CD14-positive monocyte (primary cell): ENCODE measurements at regions of chr18 and their contacts with region 1.

Region 1: DNA sequence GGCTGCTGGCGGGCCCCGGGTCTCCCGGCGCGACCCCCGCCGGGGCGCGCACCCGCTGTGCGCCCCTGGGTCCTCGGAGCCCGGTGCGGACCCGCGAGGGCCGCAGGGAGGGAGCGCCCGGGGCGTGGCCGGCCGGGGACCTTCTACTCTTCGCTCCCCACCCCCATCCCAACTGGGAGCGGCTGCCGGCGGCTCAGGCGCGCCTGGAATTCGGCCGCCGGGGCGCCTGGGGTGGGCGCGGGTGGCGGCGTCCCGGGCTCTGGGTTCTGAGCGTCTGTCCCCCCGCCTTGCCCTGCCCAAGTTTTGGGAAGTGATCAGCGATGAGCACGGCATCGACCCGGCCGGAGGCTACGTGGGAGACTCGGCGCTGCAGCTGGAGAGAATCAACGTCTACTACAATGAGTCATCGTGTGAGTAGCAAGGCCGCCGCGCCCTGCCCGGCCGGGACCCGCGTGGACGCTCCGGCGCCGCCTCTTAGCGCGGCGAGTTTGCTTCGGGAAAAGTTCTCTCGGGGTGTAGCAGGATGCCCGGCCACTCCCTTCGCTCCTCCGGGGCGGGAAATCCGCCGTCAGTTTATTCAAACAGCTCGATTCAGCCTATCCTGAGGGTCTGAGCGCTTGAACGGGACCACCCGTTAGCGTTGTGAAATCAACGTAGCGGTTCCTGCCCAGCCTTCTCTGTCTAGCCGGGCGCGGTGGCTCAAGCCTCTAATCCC is 502 bp downstream of the TUBB6 start:
- DNase-seq: peak; percentile 88 to 90 (median 88)
- H3K4me3 ChIP-seq: peak overlapping the region; percentile 24 to 80 (median 56)
- H3K4me3 Mint-ChIP-seq: peak overlapping the region; percentile 82 to 87
- H3K27ac ChIP-seq: peak overlapping the region in 1 of 2 donors; percentile 78
- H3K27ac Mint-ChIP-seq: peak overlapping the region; percentile 66 to 92 (median 77)
- H3K4me1 ChIP-seq: peaks cover 23 to 34% of the 10 kb centered on the region in 2 donors
- H3K4me1 Mint-ChIP-seq: peaks cover 26% of the 10 kb centered on the region
- H3K27me3 ChIP-seq: peaks cover 0 to 33% of the 10 kb centered on the region in 2 donors
- H3K27me3 Mint-ChIP-seq: peaks cover 17 to 43% (median 36%) of the 10 kb centered on the region in 3 donors
- CTCF ChIP-seq: no peak

Region 2: GRCh38 chr18:12361770-12362378 is 53.3 kb after region 1 on chr18:
- intact Hi-C with region 1: no loop called
- DNase-seq: no peak
- H3K4me3 ChIP-seq: no peak overlapping the region
- H3K4me3 Mint-ChIP-seq: no peak overlapping the region
- H3K27ac ChIP-seq: no peak overlapping the region
- H3K27ac Mint-ChIP-seq: peak overlapping the region in 1 of 7 donors; percentile 61
- H3K4me1 ChIP-seq: peaks cover 2 to 5% of the 10 kb centered on the region in 2 donors
- H3K4me1 Mint-ChIP-seq: peaks cover 5% of the 10 kb centered on the region
- H3K27me3 ChIP-seq: no peaks in the 10 kb centered on the region
- H3K27me3 Mint-ChIP-seq: no peaks in the 10 kb centered on the region
- CTCF ChIP-seq: no peak

Region 3: GRCh38 chr18:12376718-12377555 is 68.4 kb after region 1 on chr18 and contains the start of gene AFG3L2:
- intact Hi-C with region 1: loop called (anchors 5 to 10 kb)
- DNase-seq: peak; percentile 98 to 99 (median 99)
- H3K4me3 ChIP-seq: peak within 1 kb of the TSS; percentile 66 to 77 (median 66)
- H3K4me3 Mint-ChIP-seq: peak within 1 kb of the TSS; percentile 86 to 96
- H3K27ac ChIP-seq: peak within 1 kb of the TSS; percentile 89 to 96
- H3K27ac Mint-ChIP-seq: peak within 1 kb of the TSS; percentile 92 to 98 (median 96)
- H3K4me1 ChIP-seq: peaks cover 25 to 27% of the 10 kb centered on the region in 2 donors
- H3K4me1 Mint-ChIP-seq: peaks cover 36% of the 10 kb centered on the region
- H3K27me3 ChIP-seq: no peaks in the 10 kb centered on the region
- H3K27me3 Mint-ChIP-seq: no peaks in the 10 kb centered on the region
- CTCF ChIP-seq: no peak
- polyA plus RNA-seq, gene AFG3L2: 13.9 to 15.5 (median 13.9) TPM

Region 4: DNA sequence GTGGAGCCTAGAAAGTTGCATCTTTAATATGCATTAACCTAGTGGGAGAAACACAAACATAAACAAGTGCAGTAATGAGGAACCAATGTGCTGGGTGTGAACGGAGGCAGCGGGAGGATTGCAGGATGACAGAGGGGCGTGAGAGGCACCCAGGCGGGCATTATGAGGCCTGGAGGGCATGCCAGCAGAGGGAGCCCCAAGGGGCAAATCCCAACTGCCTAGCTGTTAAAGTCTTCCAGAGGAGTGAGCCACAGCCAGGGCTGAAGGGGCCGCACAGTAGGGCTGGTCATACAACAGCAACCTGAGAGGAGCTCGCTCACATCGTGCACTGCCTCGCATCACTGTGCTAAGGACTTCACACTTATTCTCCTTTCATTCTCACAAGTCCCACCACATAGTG is 85.9 kb after region 1 on chr18:
- intact Hi-C with region 1: no loop called
- DNase-seq: peak in 2 of 3 donors; percentile 15 to 24
- H3K4me3 ChIP-seq: no peak overlapping the region
- H3K4me3 Mint-ChIP-seq: no peak overlapping the region
- H3K27ac ChIP-seq: no peak overlapping the region
- H3K27ac Mint-ChIP-seq: peak overlapping the region in 1 of 7 donors; percentile 40
- H3K4me1 ChIP-seq: no peaks in the 10 kb centered on the region
- H3K4me1 Mint-ChIP-seq: peaks cover 4% of the 10 kb centered on the region
- H3K27me3 ChIP-seq: no peaks in the 10 kb centered on the region
- H3K27me3 Mint-ChIP-seq: peaks cover 1 to 4% (median 3%) of the 10 kb centered on the region in 3 donors
- CTCF ChIP-seq: peak; percentile 19